CD14-positive monocyte (primary cell): ENCODE measurements at regions of chr11 and their contacts with region 1.

Region 1: GRCh38 chr11:6196396-6196795 is 2.6 kb upstream of the OR52W1 start:
- DNase-seq: peak in 1 of 3 donors; percentile 42
- H3K4me3 ChIP-seq: no peak overlapping the region
- H3K4me3 Mint-ChIP-seq: no peak overlapping the region
- H3K27ac ChIP-seq: peak overlapping the region in 1 of 2 donors; percentile 23
- H3K27ac Mint-ChIP-seq: peak overlapping the region in 3 of 7 donors; percentile 19 to 56 (median 46)
- H3K4me1 ChIP-seq: peaks cover 46 to 76% of the 10 kb centered on the region in 2 donors
- H3K4me1 Mint-ChIP-seq: peaks cover 75% of the 10 kb centered on the region
- H3K27me3 ChIP-seq: no peaks in the 10 kb centered on the region
- H3K27me3 Mint-ChIP-seq: peaks cover 0 to 3% (median 1%) of the 10 kb centered on the region in 3 donors
- CTCF ChIP-seq: no peak

Region 2: GRCh38 chr11:6127881-6128280 is 68.5 kb before region 1 on chr11:
- intact Hi-C with region 1: loop called (anchors 5 to 10 kb)
- DNase-seq: peak; percentile 54 to 77 (median 69)
- H3K4me3 ChIP-seq: no peak overlapping the region
- H3K4me3 Mint-ChIP-seq: no peak overlapping the region
- H3K27ac ChIP-seq: peak overlapping the region in 1 of 2 donors; percentile 82
- H3K27ac Mint-ChIP-seq: peak overlapping the region; percentile 88 to 95 (median 95)
- H3K4me1 ChIP-seq: peaks cover 58 to 72% of the 10 kb centered on the region in 2 donors
- H3K4me1 Mint-ChIP-seq: peaks cover 59% of the 10 kb centered on the region
- H3K27me3 ChIP-seq: no peaks in the 10 kb centered on the region
- H3K27me3 Mint-ChIP-seq: no peaks in the 10 kb centered on the region
- CTCF ChIP-seq: no peak

Region 3: GRCh38 chr11:6219359-6219758 is 23.0 kb after region 1 on chr11:
- intact Hi-C with region 1: no loop called
- DNase-seq: peak in 2 of 3 donors; percentile 60 to 79
- H3K4me3 ChIP-seq: no peak overlapping the region
- H3K4me3 Mint-ChIP-seq: no peak overlapping the region
- H3K27ac ChIP-seq: peak overlapping the region in 1 of 2 donors; percentile 71
- H3K27ac Mint-ChIP-seq: peak overlapping the region in 5 of 7 donors; percentile 60 to 72 (median 69)
- H3K4me1 ChIP-seq: peaks cover 19 to 39% of the 10 kb centered on the region in 2 donors
- H3K4me1 Mint-ChIP-seq: peaks cover 29% of the 10 kb centered on the region
- H3K27me3 ChIP-seq: no peaks in the 10 kb centered on the region
- H3K27me3 Mint-ChIP-seq: peaks cover 0 to 3% (median 0%) of the 10 kb centered on the region in 3 donors
- CTCF ChIP-seq: no peak